K562 (cell line): ENCODE measurements at regions of chr22 and their contacts with region 1.

Region 1: GRCh38 chr22:38353142-38353629 is 36.0 kb upstream of the CSNK1E start:
- DNase-seq: peak; percentile 72 to 84 (median 78)
- ATAC-seq: peak; percentile 91
- H3K4me3 ChIP-seq: no peak overlapping the region
- H3K27ac ChIP-seq: no peak overlapping the region
- H3K4me1 ChIP-seq: peaks cover 0 to 17% of the 10 kb centered on the region in 2 experiments; a peak in 3 of 5 replicates
- H3K27me3 ChIP-seq: no peaks in the 10 kb centered on the region; a peak in 1 of 5 replicates
- CTCF ChIP-seq: peak; percentile 76 to 90 (median 78)
- EP300 ChIP-seq: no peak
- POLR2A ChIP-seq: no peak
- RAD21 ChIP-seq: peak; percentile 72 to 80

Region 2: DNA sequence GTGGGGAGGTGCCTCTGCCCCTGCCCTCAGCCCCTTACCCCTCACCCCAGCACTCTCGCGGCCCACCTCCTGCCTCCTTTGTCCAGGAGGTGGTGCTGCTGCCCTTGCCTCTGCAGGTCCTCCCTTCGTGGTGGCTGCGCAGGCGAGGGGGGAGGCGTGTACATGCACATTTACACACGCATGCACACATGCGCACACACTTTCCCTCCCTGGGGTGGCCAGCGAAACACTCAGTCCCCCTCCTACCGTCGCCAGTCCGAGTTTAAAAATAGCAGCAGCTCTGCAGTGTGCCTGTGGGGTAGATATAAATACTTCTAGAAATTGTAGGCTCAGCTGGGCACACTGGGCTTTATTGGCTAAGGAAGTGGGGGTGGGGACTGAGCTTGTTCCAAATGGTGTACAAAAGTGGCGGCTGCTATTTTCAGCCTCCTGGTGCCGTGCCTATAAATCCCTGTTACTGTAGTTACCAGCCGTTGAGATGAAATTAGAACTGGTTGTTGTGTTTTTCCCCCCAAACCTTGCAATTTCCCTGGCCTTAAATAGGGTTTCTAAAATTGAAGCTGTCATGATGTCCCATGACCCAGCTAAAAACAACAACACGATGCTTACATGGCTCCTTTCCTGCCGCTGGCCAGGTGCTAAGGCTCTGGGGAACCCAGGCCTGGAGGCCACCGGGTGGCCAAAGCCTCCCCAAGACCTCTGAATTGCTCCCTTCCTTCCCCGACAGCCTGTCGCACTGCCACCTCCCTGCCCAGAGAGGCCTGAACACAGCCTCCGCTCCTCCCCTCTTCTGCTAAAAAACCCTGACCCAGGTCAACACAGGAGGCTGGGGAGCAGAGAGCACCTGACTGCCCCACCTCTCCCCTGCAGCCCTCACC is 283.6 kb before region 1 on chr22:
- CTCF ChIA-PET with region 1: no interaction called
- POLR2A ChIA-PET with region 1: interaction called, 4 read pairs
- in situ Hi-C with region 1: loop called (anchors 10 kb)
- intact Hi-C with region 1: no loop called
- DNase-seq: peak; percentile 61 to 67 (median 64)
- ATAC-seq: peak; percentile 89
- H3K4me3 ChIP-seq: no peak overlapping the region
- H3K27ac ChIP-seq: no peak overlapping the region
- H3K4me1 ChIP-seq: peaks cover 0 to 16% of the 10 kb centered on the region in 2 experiments; a peak in 2 of 5 replicates
- H3K27me3 ChIP-seq: no peaks in the 10 kb centered on the region
- CTCF ChIP-seq: peak; percentile 60 to 68 (median 66); a peak in 5 of 6 replicates
- EP300 ChIP-seq: no peak
- POLR2A ChIP-seq: no peak
- RAD21 ChIP-seq: peak; percentile 46 to 64

Region 3: DNA sequence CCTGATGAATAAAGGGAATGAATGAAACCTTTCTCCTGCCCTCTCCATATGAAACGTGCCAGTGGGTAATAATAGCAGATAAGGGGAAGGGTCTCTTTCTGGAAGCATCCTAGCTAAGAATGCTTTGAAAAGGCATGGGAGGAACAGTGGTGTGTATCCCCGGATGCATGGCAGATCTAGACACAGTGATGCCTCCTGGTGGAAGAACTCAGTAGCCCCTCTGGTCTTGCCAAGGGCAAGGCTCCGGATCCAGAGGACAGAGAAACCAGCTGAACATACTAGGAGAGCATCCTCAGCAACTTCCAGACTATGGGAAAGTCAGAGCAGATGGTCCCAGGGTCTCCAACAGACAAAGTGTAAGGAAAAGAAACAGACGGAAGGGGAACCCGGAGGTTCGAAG is 249.1 kb before region 1 on chr22:
- CTCF ChIA-PET with region 1: no interaction called
- POLR2A ChIA-PET with region 1: no interaction called
- in situ Hi-C with region 1: no loop called
- intact Hi-C with region 1: no loop called
- DNase-seq: peak; percentile 43 to 50 (median 46)
- ATAC-seq: peak; percentile 86
- H3K4me3 ChIP-seq: no peak overlapping the region
- H3K27ac ChIP-seq: no peak overlapping the region
- H3K4me1 ChIP-seq: peaks cover 0 to 9% of the 10 kb centered on the region in 2 experiments; a peak in 4 of 5 replicates
- H3K27me3 ChIP-seq: no peaks in the 10 kb centered on the region
- CTCF ChIP-seq: peak; percentile 45 to 54 (median 48)
- EP300 ChIP-seq: no peak
- POLR2A ChIP-seq: no peak
- RAD21 ChIP-seq: peak in 1 of 2 experiments; percentile 40; a peak in 2 of 4 replicates

Region 4: DNA sequence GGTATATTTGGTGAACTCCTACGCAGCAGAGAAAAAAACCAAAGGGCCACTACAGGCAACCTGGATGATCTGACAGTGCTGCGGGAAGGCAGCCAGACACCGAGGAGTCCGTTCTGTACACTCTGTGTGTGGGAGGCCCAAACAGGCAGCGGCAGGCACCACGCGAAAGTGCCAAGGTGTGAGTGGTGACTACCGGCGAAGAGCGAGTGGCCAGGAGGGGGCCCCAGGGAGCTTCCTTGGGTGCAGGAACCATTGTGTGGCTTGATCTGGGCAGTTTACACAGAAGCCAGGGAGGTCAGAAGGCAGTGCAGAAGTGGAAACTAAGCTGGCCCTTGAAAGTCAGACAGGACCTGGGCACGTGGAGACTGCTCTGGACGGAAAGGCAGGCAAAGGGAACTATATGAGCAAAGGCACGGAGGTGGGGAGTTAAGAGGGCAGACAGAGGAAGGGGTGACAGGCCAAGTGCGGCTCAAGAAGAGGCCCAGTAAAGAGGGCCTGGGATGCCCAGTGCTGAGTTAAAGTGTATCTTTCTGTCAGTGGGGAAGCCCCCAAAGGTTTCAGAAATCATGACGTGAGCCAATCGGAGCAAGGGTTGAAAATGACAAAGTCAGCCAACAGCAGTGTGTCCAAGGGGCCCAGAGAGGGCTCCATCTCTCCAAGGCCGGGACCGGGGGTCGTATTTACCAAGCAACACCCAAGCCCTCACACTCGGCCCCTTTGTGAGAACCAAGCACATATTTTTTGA is 91.0 kb before region 1 on chr22:
- CTCF ChIA-PET with region 1: no interaction called
- POLR2A ChIA-PET with region 1: no interaction called
- in situ Hi-C with region 1: no loop called
- intact Hi-C with region 1: loop called (anchors 10 kb)
- DNase-seq: peak; percentile 33 to 57 (median 46)
- ATAC-seq: peak; percentile 87
- H3K4me3 ChIP-seq: no peak overlapping the region
- H3K27ac ChIP-seq: no peak overlapping the region
- H3K4me1 ChIP-seq: peaks cover 25 to 36% of the 10 kb centered on the region in 2 experiments
- H3K27me3 ChIP-seq: no peaks in the 10 kb centered on the region
- CTCF ChIP-seq: peak; percentile 62 to 73 (median 66)
- EP300 ChIP-seq: no peak
- POLR2A ChIP-seq: no peak
- RAD21 ChIP-seq: peak in 1 of 2 experiments; percentile 58; a peak in 2 of 4 replicates

Region 5: DNA sequence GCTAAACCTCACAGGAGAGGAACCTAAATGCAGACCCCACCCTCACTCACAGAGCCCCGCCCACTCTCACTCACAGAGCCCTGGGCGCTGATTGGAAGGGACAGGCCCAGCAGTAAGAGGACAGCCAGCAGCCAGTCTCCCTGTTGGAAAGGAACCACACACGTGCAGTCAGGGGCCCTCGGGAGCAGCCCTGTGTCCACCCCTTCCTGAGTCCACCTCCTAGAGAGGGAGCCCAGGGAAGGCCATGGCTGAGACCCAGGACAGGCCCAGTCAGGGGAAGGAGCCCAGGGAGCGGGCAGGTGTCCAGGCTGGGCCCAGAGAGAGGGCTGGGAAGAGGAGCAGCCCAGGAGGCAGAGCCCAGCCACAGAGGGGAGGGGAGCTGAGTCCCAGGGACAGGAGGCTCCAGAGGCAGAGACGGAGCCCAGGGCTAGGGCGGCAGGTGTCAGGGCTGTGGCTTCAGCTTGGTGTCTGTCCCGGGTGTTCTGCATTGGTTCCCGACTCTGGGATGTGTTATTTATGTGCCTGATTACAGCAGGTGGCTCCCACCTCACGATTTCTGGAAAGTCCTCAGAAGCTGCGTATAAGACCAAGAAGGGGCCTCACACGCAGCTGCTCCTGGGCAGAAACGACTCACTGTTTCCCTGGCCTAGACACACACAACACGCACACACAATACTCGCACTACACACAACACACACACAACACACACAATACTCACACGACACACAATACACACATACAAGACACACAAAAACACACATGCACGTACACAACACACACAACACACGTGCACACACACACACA is 734.9 kb after region 1 on chr22:
- CTCF ChIA-PET with region 1: no interaction called
- POLR2A ChIA-PET with region 1: no interaction called
- in situ Hi-C with region 1: no loop called
- intact Hi-C with region 1: no loop called
- DNase-seq: peak in 3 of 4 experiments; percentile 16 to 34 (median 24)
- ATAC-seq: peak; percentile 87
- H3K4me3 ChIP-seq: no peak overlapping the region
- H3K27ac ChIP-seq: no peak overlapping the region
- H3K4me1 ChIP-seq: peaks cover 2 to 25% of the 10 kb centered on the region in 2 experiments; a peak in 4 of 5 replicates
- H3K27me3 ChIP-seq: no peaks in the 10 kb centered on the region
- CTCF ChIP-seq: no peak
- EP300 ChIP-seq: no peak
- POLR2A ChIP-seq: no peak
- RAD21 ChIP-seq: no peak